H1 (cell line): ENCODE measurements at regions of chr5 and their contacts with region 1.

Region 1: GRCh38 chr5:116289276-116289675 is 204.5 kb downstream of the COMMD10 start:
- DNase-seq: peak; percentile 31 to 72
- H3K4me3 ChIP-seq: no peak overlapping the region
- H3K27ac ChIP-seq: no peak overlapping the region
- H3K4me1 ChIP-seq: no peaks in the 10 kb centered on the region
- H3K27me3 ChIP-seq: no peaks in the 10 kb centered on the region
- CTCF ChIP-seq: peak; percentile 50 to 74 (median 72)
- EP300 ChIP-seq: no peak
- POLR2A ChIP-seq: no peak
- RAD21 ChIP-seq: peak; percentile 65 to 75

Region 2: DNA sequence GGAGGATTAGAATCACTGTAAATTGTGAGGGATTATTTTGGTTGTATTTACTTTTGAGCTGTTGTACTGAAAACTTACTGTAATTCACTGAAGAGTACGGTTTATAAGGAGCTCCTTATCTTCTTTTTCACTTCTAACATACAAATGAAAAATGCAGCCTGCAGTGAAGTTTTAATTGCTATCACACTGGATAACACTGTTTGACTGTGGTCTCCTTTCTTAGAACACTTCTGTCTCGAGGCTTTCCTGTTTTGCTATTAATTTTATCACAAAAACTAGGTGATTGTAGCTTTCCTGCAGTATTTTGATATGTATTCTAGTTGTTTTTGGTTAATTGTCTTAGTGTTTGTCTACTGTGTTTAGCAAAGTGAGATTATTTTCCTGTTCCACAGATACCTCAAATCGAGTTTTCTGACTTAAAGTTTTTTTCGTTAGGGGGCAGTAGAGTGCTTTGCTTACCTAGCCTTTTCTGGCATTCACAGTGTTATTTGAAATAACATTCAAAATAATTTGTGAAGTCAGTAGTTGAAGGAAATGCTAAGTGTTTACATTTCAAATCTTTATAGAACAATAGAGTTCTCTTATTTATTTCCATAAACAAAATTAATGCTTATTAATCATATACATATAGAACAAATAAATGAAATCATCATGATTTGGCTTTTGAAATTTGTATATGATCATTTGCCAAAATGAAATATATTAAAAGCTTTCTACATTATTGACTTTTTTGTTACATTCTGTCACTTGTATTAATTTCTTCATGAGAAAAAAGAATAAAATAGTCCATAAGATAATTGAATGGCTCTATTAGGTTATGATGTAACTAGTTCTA is 151.5 kb before region 1 on chr5:
- CTCF ChIA-PET with region 1: interaction called, 36 read pairs
- POLR2A ChIA-PET with region 1: no interaction called
- DNase-seq: no peak
- H3K4me3 ChIP-seq: no peak overlapping the region
- H3K27ac ChIP-seq: no peak overlapping the region
- H3K4me1 ChIP-seq: no peaks in the 10 kb centered on the region
- H3K27me3 ChIP-seq: no peaks in the 10 kb centered on the region
- CTCF ChIP-seq: peak in 2 of 3 experiments; percentile 53 to 63; a peak in 2 of 4 replicates
- EP300 ChIP-seq: no peak
- POLR2A ChIP-seq: no peak
- RAD21 ChIP-seq: peak; percentile 80 to 82

Region 3: GRCh38 chr5:116144103-116144502 is 145.2 kb before region 1 on chr5:
- CTCF ChIA-PET with region 1: interaction called, 19 read pairs
- POLR2A ChIA-PET with region 1: no interaction called
- DNase-seq: no peak
- H3K4me3 ChIP-seq: no peak overlapping the region
- H3K27ac ChIP-seq: no peak overlapping the region
- H3K4me1 ChIP-seq: no peaks in the 10 kb centered on the region
- H3K27me3 ChIP-seq: no peaks in the 10 kb centered on the region
- CTCF ChIP-seq: no peak
- EP300 ChIP-seq: no peak
- POLR2A ChIP-seq: no peak
- RAD21 ChIP-seq: no peak

Region 4: GRCh38 chr5:116299752-116300640 is 10.7 kb after region 1 on chr5:
- CTCF ChIA-PET with region 1: interaction called, 39 read pairs
- POLR2A ChIA-PET with region 1: no interaction called
- DNase-seq: no peak
- H3K4me3 ChIP-seq: no peak overlapping the region
- H3K27ac ChIP-seq: no peak overlapping the region
- H3K4me1 ChIP-seq: no peaks in the 10 kb centered on the region
- H3K27me3 ChIP-seq: no peaks in the 10 kb centered on the region
- CTCF ChIP-seq: no peak
- EP300 ChIP-seq: no peak
- POLR2A ChIP-seq: no peak
- RAD21 ChIP-seq: no peak

Region 5: GRCh38 chr5:116361171-116361967 is 72.1 kb after region 1 on chr5:
- CTCF ChIA-PET with region 1: interaction called, 11 read pairs
- POLR2A ChIA-PET with region 1: no interaction called
- DNase-seq: peak; percentile 49 to 87
- H3K4me3 ChIP-seq: peak overlapping the region; percentile 27 to 60 (median 34)
- H3K27ac ChIP-seq: no peak overlapping the region
- H3K4me1 ChIP-seq: peaks cover 0 to 8% (median 2%) of the 10 kb centered on the region in 4 experiments; a peak in 6 of 7 replicates
- H3K27me3 ChIP-seq: peaks cover 0 to 5% (median 3%) of the 10 kb centered on the region in 4 experiments; a peak in 4 of 7 replicates
- CTCF ChIP-seq: peak; percentile 46 to 63 (median 60)
- EP300 ChIP-seq: 0 out of 3 replicates have a peak, but pooled peaks of 1 of the 2 experiments have one; percentile 8
- POLR2A ChIP-seq: no peak; a peak in 1 of 3 replicates
- RAD21 ChIP-seq: peak; percentile 62 to 74

Region 6: GRCh38 chr5:116395631-116396203 is 106.4 kb after region 1 on chr5:
- CTCF ChIA-PET with region 1: no interaction called
- POLR2A ChIA-PET with region 1: no interaction called
- DNase-seq: no peak
- H3K4me3 ChIP-seq: no peak overlapping the region
- H3K27ac ChIP-seq: no peak overlapping the region
- H3K4me1 ChIP-seq: no peaks in the 10 kb centered on the region
- H3K27me3 ChIP-seq: no peaks in the 10 kb centered on the region
- CTCF ChIP-seq: no peak
- EP300 ChIP-seq: no peak
- POLR2A ChIP-seq: no peak
- RAD21 ChIP-seq: no peak